ENCODE measurements at regions of chr6 and their contacts with region 1.

Region 1: GRCh38 chr6:73653571-73654424 is at the start of gene SLC17A5:
- DNase-seq: peak; percentile 92
- H3K4me3 Mint-ChIP-seq: peak within 1 kb of the TSS; percentile 97
- H3K27ac Mint-ChIP-seq: peak within 1 kb of the TSS; percentile 86
- H3K4me1 Mint-ChIP-seq: peaks cover 18% of the 10 kb centered on the region
- H3K27me3 Mint-ChIP-seq: no peaks in the 10 kb centered on the region
- total RNA-seq, gene SLC17A5: 1.7 to 2.0 TPM

Region 2: GRCh38 chr6:73451223-73452107 is 202.3 kb before region 1 on chr6:
- CTCF ChIA-PET with region 1: no interaction called
- intact Hi-C with region 1: loop called (anchors 1 kb)
- DNase-seq: peak; percentile 60
- H3K4me3 Mint-ChIP-seq: peak overlapping the region; percentile 90
- H3K27ac Mint-ChIP-seq: peak overlapping the region; percentile 86
- H3K4me1 Mint-ChIP-seq: peaks cover 35% of the 10 kb centered on the region
- H3K27me3 Mint-ChIP-seq: no peaks in the 10 kb centered on the region

Region 3: GRCh38 chr6:73520688-73521350 is 133.0 kb before region 1 on chr6 and contains the start of gene EEF1A1:
- CTCF ChIA-PET with region 1: interaction called, 16 read pairs
- intact Hi-C with region 1: loop called (anchors 1 kb)
- DNase-seq: peak; percentile 100
- H3K4me3 Mint-ChIP-seq: peak within 1 kb of the TSS; percentile 93
- H3K27ac Mint-ChIP-seq: peak within 1 kb of the TSS; percentile 99
- H3K4me1 Mint-ChIP-seq: peaks cover 33% of the 10 kb centered on the region
- H3K27me3 Mint-ChIP-seq: peaks cover 4% of the 10 kb centered on the region
- total RNA-seq, gene EEF1A1: 18,342 to 18,732 TPM

Region 4: DNA sequence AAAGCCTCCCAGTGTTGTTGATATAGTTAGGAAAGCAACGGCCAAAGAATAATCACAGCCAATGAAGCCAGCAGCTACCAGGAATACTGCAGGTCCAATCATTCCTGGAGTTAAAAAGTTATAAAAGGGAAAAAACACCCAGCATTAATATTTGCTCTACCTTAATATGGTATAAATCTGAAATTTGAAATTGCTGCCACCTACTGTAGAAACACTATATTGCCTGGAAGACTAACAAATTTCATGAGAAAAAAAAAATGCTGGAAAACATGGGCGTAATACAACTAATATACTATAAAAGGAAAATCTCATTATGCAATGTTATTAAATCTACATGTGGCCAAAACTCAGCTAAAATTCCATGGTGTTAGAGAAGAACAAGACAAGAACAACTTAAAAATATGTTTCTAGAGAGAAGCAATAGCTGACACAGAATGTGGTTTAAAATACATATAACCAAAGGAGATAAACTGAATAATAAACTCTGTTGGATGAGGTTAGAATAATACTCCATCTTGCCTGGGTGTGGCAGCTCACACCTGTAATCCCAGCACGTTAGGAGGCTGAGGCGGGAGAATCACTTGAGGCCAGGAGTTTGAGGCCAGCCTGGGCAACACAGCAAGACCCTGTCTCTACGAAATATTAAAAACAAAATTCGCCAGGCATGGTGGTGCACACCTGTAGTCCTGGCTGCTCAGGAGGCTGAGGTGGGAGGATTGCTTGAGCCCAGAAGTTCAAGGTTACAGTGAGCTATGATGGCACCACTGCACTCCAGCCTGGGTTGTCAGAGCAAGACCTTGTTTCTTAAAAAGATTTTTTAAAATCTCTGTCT is 43.1 kb before region 1 on chr6:
- CTCF ChIA-PET with region 1: no interaction called
- intact Hi-C with region 1: loop called (anchors 1 kb)
- DNase-seq: no peak
- H3K4me3 Mint-ChIP-seq: no peak overlapping the region
- H3K27ac Mint-ChIP-seq: peak overlapping the region; percentile 26
- H3K4me1 Mint-ChIP-seq: peaks cover 7% of the 10 kb centered on the region
- H3K27me3 Mint-ChIP-seq: no peaks in the 10 kb centered on the region

Region 5: DNA sequence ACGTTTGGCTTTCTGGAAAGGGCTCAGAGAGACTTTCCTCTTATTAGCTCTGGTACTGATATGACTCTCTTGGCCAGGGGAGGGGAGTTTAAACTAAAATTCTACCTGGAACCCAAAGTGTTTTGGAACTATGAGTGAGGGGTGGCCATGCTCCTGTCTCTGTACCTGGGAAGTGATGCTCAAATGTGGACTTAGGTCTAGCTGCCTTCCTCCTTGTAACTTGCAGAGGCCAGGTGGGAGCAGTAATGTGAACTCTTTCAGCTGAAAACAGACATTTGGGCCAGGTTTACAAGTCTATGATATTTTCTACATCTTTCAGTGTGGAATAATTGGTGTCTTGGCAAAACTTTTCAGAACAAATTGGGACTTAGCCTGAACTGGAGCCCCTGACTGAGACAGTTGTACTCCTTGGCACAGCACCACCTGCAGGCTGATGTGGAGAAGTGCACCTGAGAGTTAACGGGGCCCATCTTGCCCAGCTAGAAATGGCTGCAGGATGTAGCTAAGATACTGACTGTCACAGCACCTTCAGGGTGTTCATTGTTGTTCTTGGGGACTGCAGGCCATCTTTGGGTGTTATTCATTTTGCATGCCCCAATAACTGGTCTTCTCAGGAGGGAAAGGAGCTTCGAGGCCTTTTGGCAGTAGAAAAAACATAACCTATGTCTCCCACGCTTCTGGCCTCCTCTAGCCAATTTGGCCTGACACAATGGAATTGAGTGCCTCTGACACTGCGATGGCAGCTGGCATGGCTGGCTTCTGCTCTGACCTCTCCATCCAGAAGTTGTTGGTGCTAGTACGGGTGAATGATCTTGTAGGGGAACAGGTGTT is 79.3 kb after region 1 on chr6:
- CTCF ChIA-PET with region 1: interaction called, 22 read pairs
- intact Hi-C with region 1: loop called (anchors 1 kb)
- DNase-seq: peak; percentile 87
- H3K4me3 Mint-ChIP-seq: no peak overlapping the region
- H3K27ac Mint-ChIP-seq: no peak overlapping the region
- H3K4me1 Mint-ChIP-seq: peaks cover 14% of the 10 kb centered on the region
- H3K27me3 Mint-ChIP-seq: no peaks in the 10 kb centered on the region

Region 6: DNA sequence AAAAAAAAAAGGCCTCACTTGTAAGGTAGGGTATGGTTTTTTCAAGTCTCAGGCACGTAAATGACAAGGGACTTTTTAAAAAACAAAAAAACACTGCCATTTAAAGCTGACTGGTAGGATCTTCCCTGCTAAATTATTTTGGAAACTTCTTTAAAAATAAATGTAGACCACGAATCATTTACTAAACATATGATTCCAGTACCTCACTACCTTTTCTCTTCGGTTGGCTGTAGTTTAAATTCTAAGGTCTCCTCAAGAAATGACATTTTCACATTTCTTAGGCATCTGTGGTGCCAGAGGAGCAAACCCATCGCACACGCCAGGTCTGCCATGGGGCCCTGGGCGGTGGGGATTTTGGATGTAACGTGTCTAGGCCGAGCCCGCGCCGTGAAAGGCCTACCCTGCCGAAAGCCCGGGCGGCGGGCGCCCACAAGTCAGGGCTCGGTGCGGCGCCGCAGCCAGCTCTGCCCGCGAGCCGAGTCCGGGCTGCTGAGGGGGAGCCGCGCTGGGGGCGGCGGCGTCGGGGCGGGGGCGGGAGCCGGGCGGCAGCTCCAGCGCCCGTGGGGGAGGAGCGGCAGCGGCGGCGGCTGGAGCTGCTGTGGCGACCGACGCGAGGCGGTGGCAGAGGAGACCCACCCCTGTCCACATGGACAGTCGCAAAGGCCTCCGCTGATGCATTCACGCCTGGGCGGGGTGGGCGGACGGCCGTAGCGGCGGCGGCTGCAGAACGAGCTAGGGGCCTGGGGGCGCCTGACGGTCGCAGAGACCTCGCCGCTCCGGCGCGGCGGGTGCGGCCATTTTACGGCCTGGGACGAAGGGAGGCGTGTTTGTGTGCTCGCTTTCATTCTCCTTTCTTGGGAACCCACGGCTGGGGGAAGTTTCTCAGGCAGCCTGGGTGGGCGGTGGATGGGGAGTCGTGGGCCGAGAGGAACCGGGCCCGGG is 1947.8 kb after region 1 on chr6 and contains the start of gene SENP6:
- CTCF ChIA-PET with region 1: no interaction called
- intact Hi-C with region 1: loop called (anchors 5 kb)
- DNase-seq: peak; percentile 68
- H3K4me3 Mint-ChIP-seq: peak within 1 kb of the TSS; percentile 95
- H3K27ac Mint-ChIP-seq: peak within 1 kb of the TSS; percentile 99
- H3K4me1 Mint-ChIP-seq: peaks cover 55% of the 10 kb centered on the region
- H3K27me3 Mint-ChIP-seq: no peaks in the 10 kb centered on the region
- total RNA-seq, gene SENP6: 54.0 to 57.7 TPM